Common myeloid progenitor, CD34-positive (primary cell): ENCODE measurements at regions of chr9 and their contacts with region 1.

Region 1: DNA sequence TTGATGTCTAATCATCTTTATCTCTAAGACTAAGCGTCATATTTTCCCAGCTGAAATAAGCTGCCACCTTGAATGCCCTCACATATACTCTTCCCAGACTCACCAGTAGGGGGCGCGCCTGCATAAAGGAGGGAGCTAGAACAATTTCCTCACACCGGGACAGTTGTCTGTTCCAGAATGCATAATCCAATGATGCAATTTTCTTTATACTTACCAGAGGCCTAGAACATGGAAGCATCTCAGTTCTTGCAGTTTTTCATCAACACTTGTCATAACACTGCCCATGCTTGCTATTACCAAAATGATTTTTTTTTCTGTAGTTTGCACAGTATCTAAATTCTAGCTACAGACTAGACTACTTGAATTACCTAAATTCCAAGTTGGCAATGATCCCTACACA is 203.9 kb downstream of the FRMD3 start:
- DNase-seq: peak; percentile 49 to 71 (median 67)
- H3K4me3 ChIP-seq: no peak overlapping the region
- H3K27ac ChIP-seq: no peak overlapping the region
- H3K4me1 ChIP-seq: no peaks in the 10 kb centered on the region
- H3K27me3 ChIP-seq: peaks cover 0 to 3% (median 0%) of the 10 kb centered on the region in 5 experiments

Region 2: GRCh38 chr9:83166369-83166768 is 168.0 kb before region 1 on chr9:
- CTCF ChIA-PET with region 1: no interaction called
- POLR2A ChIA-PET with region 1: no interaction called
- DNase-seq: peak in 2 of 3 donors; percentile 1 to 22
- H3K4me3 ChIP-seq: no peak overlapping the region
- H3K27ac ChIP-seq: no peak overlapping the region
- H3K4me1 ChIP-seq: no peaks in the 10 kb centered on the region
- H3K27me3 ChIP-seq: no peaks in the 10 kb centered on the region

Region 3: GRCh38 chr9:83382421-83382820 is 48.1 kb after region 1 on chr9:
- CTCF ChIA-PET with region 1: no interaction called
- POLR2A ChIA-PET with region 1: no interaction called
- DNase-seq: no peak
- H3K4me3 ChIP-seq: no peak overlapping the region
- H3K27ac ChIP-seq: no peak overlapping the region
- H3K4me1 ChIP-seq: no peaks in the 10 kb centered on the region
- H3K27me3 ChIP-seq: no peaks in the 10 kb centered on the region

Region 4: DNA sequence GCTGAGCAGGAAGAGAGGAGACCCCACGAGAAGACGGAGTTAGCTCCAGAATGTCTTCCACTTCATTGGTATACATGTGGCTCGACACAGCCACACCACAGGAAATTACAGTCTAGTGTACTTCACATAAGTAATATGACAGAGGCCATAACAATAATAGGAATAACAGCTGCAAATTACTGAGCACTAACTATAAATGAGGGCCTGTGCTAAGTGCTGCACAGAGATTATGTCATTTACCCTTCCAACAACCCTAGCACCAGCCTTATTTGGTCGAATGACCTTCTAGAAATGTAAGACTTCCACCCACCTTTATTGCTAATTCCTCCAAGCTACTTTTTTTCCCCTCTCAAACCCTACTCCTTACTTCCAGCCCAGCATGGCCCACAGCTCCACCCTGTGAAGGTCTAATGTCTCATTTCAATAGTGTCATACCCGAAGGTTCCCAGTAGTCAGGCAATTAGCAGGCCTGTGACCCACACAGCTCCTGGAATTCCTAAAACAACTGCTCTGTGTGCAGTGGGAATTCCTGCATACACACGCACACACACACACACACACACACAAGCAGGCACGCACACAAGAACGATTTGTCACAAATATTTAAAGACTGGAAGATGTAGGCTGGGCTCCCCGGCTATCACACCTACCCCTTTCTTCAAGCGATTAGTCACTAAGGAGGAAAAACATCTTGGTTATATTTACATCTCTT is 69.4 kb after region 1 on chr9:
- CTCF ChIA-PET with region 1: no interaction called
- POLR2A ChIA-PET with region 1: no interaction called
- DNase-seq: no peak
- H3K4me3 ChIP-seq: no peak overlapping the region
- H3K27ac ChIP-seq: no peak overlapping the region
- H3K4me1 ChIP-seq: no peaks in the 10 kb centered on the region
- H3K27me3 ChIP-seq: no peaks in the 10 kb centered on the region

Region 5: DNA sequence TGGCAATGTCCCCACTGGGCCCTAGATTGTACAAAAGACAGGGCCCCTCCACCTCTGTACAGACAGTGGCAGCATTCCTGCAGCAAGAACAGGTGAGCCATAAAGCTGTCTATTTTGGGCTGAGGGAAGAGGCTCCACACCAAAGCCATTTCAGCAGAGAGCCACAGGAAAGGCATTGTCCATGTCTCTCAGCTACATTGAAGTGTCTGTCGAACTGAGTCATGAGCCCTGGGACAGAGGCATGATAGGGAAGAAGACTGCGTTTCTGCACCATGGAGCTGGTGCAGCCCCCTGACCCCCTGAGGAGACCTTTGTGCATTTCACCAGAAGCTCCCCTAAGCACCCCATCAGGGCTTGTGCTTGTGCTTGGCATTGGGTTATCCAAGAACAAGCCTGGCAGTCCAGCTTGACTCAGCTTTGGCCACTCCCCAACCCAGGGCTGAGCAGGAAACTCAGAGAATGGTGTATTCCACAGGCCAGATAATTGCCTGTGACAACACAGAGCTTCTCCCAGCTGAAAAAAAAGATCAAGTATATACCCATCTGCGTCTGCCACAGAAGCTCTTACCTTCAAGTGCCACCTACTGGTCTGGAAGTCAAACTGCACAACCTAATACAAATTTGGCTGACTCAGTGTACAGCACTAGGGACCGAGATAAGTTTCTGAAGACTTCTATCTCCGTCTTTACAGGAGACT is 209.8 kb after region 1 on chr9:
- CTCF ChIA-PET with region 1: interaction called, 18 read pairs
- POLR2A ChIA-PET with region 1: no interaction called
- DNase-seq: peak; percentile 35 to 67 (median 55)
- H3K4me3 ChIP-seq: no peak overlapping the region
- H3K27ac ChIP-seq: no peak overlapping the region
- H3K4me1 ChIP-seq: peaks cover 0 to under 1% (median 0%) of the 10 kb centered on the region in 4 experiments
- H3K27me3 ChIP-seq: peaks cover 5 to 12% (median 7%) of the 10 kb centered on the region in 5 experiments